GM18951 (cell line): ENCODE measurements at regions of chr17 and their contacts with region 1.

Region 1: GRCh38 chr17:43940630-43941029 is 1.6 kb downstream of the PPY start:
- POLR2A ChIP-seq: no peak

Region 2: DNA sequence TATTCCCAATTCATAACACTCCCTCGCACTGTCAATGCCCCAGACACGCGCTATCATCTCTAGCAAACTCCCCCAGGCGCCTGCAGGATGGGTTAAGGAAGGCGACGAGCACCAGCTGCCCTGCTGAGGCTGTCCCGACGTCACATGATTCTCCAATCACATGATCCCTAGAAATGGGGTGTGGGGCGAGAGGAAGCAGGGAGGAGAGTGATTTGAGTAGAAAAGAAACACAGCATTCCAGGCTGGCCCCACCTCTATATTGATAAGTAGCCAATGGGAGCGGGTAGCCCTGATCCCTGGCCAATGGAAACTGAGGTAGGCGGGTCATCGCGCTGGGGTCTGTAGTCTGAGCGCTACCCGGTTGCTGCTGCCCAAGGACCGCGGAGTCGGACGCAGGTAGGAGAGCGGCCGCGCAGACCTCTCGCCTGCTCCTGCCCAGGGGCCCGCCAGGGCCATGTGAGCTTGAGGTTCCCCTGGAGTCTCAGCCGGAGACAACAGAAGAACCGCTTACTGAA is 404.4 kb after region 1 on chr17 and contains the start of gene GRN:
- in situ Hi-C with region 1: loop called (anchors 25 kb)
- POLR2A ChIP-seq: peak; percentile 93